ENCODE measurements at regions of chr2 and their contacts with region 1.

Region 1: GRCh38 chr2:218659258-218659987 is at the starts of genes BCS1L and ZNF142:
- DNase-seq: peak; percentile 87 to 94 (median 88)
- ATAC-seq: peak; percentile 97
- H3K4me3 ChIP-seq: peak within 1 kb of the TSS; percentile 61
- H3K27ac ChIP-seq: peak within 1 kb of the TSS; percentile 73
- H3K4me1 ChIP-seq: peaks cover 6 to 17% of the 10 kb centered on the region in 2 experiments; a peak in 3 of 5 replicates
- H3K27me3 ChIP-seq: no peaks in the 10 kb centered on the region
- CTCF ChIP-seq: no peak
- EP300 ChIP-seq: 0 out of 2 replicates have a peak, but pooled peaks have one; percentile 26
- POLR2A ChIP-seq: peak; percentile 81
- RAD21 ChIP-seq: no peak
- polyA plus RNA-seq, gene BCS1L: 83.2 to 103 TPM
- polyA plus RNA-seq, gene ZNF142: 0.50 to 1.3 TPM

Region 2: DNA sequence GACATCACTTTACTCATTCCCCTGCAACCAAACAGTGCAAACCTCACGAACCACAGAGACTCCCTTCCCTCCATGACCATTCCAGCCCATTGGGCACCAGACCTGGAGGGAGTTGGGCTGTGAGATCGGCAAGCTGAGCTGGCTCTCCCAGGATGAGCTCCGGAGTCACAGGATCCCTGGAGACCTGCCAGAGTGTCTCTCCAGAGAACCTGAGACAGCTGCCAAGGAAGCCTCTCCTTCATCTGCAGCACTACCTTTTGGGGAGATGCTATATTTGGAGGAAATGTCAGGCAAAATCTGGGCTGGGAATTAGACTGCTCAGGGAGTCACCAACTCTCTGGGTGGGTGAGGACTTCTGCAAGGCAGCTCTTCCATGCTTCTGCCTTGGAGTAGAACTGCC is 1074.1 kb before region 1 on chr2:
- CTCF ChIA-PET with region 1: no interaction called
- POLR2A ChIA-PET with region 1: no interaction called
- in situ Hi-C with region 1: no loop called
- intact Hi-C with region 1: no loop called
- DNase-seq: no peak
- ATAC-seq: no peak
- H3K4me3 ChIP-seq: no peak overlapping the region
- H3K27ac ChIP-seq: no peak overlapping the region
- H3K4me1 ChIP-seq: no peaks in the 10 kb centered on the region
- H3K27me3 ChIP-seq: no peaks in the 10 kb centered on the region
- CTCF ChIP-seq: no peak
- EP300 ChIP-seq: no peak
- POLR2A ChIP-seq: no peak
- RAD21 ChIP-seq: no peak

Region 3: GRCh38 chr2:218648088-218648786 is 11.2 kb before region 1 on chr2:
- CTCF ChIA-PET with region 1: no interaction called
- POLR2A ChIA-PET with region 1: interaction called, 10 read pairs
- in situ Hi-C with region 1: no loop called
- intact Hi-C with region 1: no loop called
- DNase-seq: peak; percentile 23 to 50 (median 44)
- ATAC-seq: peak; percentile 93
- H3K4me3 ChIP-seq: no peak overlapping the region
- H3K27ac ChIP-seq: no peak overlapping the region
- H3K4me1 ChIP-seq: no peaks in the 10 kb centered on the region
- H3K27me3 ChIP-seq: no peaks in the 10 kb centered on the region
- CTCF ChIP-seq: peak; percentile 62 to 82 (median 68)
- EP300 ChIP-seq: no peak
- POLR2A ChIP-seq: no peak
- RAD21 ChIP-seq: peak; percentile 33 to 51

Region 4: DNA sequence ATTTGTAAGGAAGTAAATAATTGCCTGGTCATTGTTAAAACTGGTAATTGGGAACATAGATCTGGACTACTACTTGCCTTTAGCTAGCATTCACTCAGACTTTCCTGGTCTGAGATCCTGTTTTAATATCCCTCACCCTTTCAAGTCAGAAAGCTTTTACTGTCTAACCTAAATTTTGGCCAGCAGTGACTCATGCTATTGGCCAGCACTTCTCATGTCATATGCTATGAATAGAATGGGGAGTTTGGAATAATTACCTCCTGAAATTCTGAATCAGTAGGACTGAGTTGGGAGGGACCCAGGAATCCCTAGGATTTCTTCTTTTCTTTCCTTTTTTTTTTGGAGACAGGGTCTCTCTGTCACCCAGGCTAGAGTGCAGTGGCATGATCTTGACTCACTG is 31.8 kb after region 1 on chr2:
- CTCF ChIA-PET with region 1: interaction called, 8 read pairs
- POLR2A ChIA-PET with region 1: no interaction called
- in situ Hi-C with region 1: no loop called
- intact Hi-C with region 1: loop called (anchors 1 kb)
- DNase-seq: no peak
- ATAC-seq: no peak
- H3K4me3 ChIP-seq: no peak overlapping the region
- H3K27ac ChIP-seq: no peak overlapping the region
- H3K4me1 ChIP-seq: 0 out of 5 replicates have a peak, but pooled peaks cover 0 to 2% of the 10 kb centered on the region in 2 experiments
- H3K27me3 ChIP-seq: no peaks in the 10 kb centered on the region
- CTCF ChIP-seq: no peak
- EP300 ChIP-seq: no peak
- POLR2A ChIP-seq: no peak
- RAD21 ChIP-seq: no peak